Ascending aorta (tissue), 2 donors: ENCODE measurements at regions of chr9 and their contacts with region 1.

Region 1: GRCh38 chr9:114108016-114108833 is 9.1 kb upstream of the KIF12 start:
- DNase-seq: peak in 1 of 2 donors; percentile 82
- H3K4me3 ChIP-seq: no peak overlapping the region
- H3K27ac ChIP-seq: no peak overlapping the region
- H3K4me1 ChIP-seq: peaks cover 0 to 9% of the 10 kb centered on the region in 2 donors
- H3K27me3 ChIP-seq: no peaks in the 10 kb centered on the region
- CTCF ChIP-seq: peak; percentile 82 to 98 (median 91)

Region 2: DNA sequence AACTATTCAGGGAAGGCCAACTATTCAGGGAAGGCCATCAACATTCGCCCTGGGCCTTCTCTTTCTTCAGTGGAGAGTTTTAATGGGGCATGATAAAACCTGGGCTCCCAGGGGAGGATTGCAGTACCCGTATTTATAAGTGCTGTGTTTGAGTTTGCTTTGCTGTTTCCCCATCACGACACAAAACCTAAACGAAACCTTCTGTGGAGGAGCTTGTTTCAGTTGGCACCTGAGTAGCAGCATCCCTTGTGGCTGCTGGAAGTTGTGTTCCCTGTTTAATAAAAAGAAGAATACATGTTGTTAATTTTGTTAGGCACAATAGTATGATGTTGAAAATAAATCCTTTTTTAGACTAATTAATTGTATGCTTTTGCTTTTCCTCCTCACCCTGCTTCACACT is 776.4 kb before region 1 on chr9:
- intact Hi-C with region 1: no loop called
- DNase-seq: no peak
- H3K4me3 ChIP-seq: no peak overlapping the region
- H3K27ac ChIP-seq: no peak overlapping the region
- H3K4me1 ChIP-seq: no peaks in the 10 kb centered on the region
- H3K27me3 ChIP-seq: no peaks in the 10 kb centered on the region
- CTCF ChIP-seq: no peak

Region 3: DNA sequence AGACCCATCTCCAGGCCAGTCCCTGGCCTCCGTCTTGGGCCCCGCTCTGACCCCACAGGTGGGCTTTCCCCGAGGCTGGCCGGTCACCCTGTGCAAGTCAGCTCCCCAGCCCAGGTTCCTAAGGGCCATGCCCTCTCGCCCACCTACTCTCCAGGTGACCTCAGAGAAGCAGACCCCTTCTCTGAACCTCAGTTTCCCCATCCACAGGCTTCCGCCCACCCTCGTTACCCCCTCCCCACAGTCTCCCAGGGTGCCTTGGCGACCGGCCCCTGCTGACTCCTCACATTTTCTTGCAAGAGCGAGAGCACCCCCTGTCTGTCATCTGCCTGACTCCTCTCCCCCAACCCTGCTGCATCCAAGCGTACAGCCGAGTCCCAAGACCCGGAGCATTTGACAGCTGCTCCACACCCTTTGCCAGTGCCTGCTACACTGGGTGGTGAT is 163.4 kb after region 1 on chr9:
- intact Hi-C with region 1: loop called (anchors 1 kb)
- DNase-seq: no peak
- H3K4me3 ChIP-seq: no peak overlapping the region
- H3K27ac ChIP-seq: no peak overlapping the region
- H3K4me1 ChIP-seq: no peaks in the 10 kb centered on the region
- H3K27me3 ChIP-seq: no peaks in the 10 kb centered on the region
- CTCF ChIP-seq: peak; percentile 40 to 69 (median 58)

Region 4: GRCh38 chr9:114291064-114291474 is 182.8 kb after region 1 on chr9:
- intact Hi-C with region 1: loop called (anchors 1 kb)
- DNase-seq: peak in 1 of 2 donors; percentile 86
- H3K4me3 ChIP-seq: no peak overlapping the region
- H3K27ac ChIP-seq: no peak overlapping the region
- H3K4me1 ChIP-seq: no peaks in the 10 kb centered on the region
- H3K27me3 ChIP-seq: no peaks in the 10 kb centered on the region
- CTCF ChIP-seq: peak; percentile 89 to 96 (median 93)